ENCODE measurements at regions of chr11 and their contacts with region 1.

Region 1: GRCh38 chr11:116960930-116961329 is 123.5 kb upstream of the APOA1 start:
- DNase-seq: no peak
- ATAC-seq: no peak
- H3K4me3 ChIP-seq: no peak overlapping the region
- H3K27ac ChIP-seq: no peak overlapping the region
- H3K4me1 ChIP-seq: peaks cover 51% of the 10 kb centered on the region
- H3K27me3 ChIP-seq: no peaks in the 10 kb centered on the region
- CTCF ChIP-seq: no peak

Region 2: DNA sequence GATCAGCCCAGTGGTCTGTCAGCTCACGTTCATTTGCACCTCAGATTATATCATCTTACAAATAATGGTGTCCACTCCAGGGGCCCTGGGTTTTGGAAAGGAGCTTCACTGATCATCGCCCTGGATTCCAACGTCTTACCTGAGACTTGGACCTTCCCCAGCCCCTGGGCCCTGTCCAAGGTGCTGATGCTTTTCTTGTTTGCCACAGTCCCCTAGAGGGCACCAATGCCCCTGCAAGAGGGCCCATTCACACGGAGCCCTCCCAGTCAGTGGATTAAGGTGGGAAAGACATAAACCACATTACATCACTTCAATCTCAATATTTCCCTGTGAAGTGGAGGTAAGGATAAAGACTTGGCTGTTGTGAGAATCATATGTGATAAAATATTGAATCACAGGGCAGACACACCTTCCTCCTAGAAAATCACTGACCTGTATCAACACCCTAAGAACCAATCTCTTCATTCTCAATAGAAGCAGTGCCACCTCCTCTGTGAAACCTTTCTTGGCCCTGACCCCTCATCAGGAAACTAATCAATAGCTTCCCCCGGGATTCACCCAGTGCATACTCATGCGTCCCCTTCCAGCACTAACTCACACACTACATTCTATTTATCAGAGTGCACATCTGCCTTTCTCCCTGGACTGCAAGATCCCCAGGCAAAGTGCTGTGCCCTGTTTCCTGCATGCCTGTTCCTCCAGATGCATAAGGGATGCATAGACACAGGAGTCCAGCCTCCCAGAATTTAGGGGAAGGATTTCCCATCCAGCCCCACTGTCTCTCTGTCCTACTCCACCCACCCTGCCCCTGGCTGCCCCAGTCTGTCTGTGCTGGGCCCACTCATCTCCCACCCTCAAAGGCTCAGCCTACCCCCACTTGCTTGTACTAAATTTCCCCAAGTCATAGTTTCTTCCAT is 355.1 kb before region 1 on chr11:
- intact Hi-C with region 1: no loop called
- DNase-seq: no peak
- ATAC-seq: no peak
- H3K4me3 ChIP-seq: no peak overlapping the region
- H3K27ac ChIP-seq: no peak overlapping the region
- H3K4me1 ChIP-seq: no peaks in the 10 kb centered on the region
- H3K27me3 ChIP-seq: peaks cover 0 to 6% (median 0%) of the 10 kb centered on the region in 3 donors
- CTCF ChIP-seq: no peak

Region 3: GRCh38 chr11:116906479-116906878 is 54.5 kb before region 1 on chr11:
- intact Hi-C with region 1: loop called in 1 of 2 experiments (anchors 5 kb)
- DNase-seq: no peak
- ATAC-seq: no peak
- H3K4me3 ChIP-seq: no peak overlapping the region
- H3K27ac ChIP-seq: no peak overlapping the region
- H3K4me1 ChIP-seq: peaks cover 14% of the 10 kb centered on the region
- H3K27me3 ChIP-seq: no peaks in the 10 kb centered on the region
- CTCF ChIP-seq: no peak

Region 4: GRCh38 chr11:117143871-117144476 is 183.0 kb after region 1 on chr11 and contains the start of gene PAFAH1B2:
- intact Hi-C with region 1: no loop called
- DNase-seq: peak; percentile 96 to 98
- ATAC-seq: peak; percentile 97 to 98 (median 98)
- H3K4me3 ChIP-seq: peak within 1 kb of the TSS; percentile 98
- H3K27ac ChIP-seq: peak within 1 kb of the TSS; percentile 87
- H3K4me1 ChIP-seq: peaks cover 32% of the 10 kb centered on the region
- H3K27me3 ChIP-seq: no peaks in the 10 kb centered on the region
- CTCF ChIP-seq: no peak
- total RNA-seq, gene PAFAH1B2: 30.8 to 46.3 (median 35.7) TPM

Measured in psoas muscle (tissue), 8 donors.